ENCODE measurements at regions of chr11 and their contacts with region 1.

Region 1: DNA sequence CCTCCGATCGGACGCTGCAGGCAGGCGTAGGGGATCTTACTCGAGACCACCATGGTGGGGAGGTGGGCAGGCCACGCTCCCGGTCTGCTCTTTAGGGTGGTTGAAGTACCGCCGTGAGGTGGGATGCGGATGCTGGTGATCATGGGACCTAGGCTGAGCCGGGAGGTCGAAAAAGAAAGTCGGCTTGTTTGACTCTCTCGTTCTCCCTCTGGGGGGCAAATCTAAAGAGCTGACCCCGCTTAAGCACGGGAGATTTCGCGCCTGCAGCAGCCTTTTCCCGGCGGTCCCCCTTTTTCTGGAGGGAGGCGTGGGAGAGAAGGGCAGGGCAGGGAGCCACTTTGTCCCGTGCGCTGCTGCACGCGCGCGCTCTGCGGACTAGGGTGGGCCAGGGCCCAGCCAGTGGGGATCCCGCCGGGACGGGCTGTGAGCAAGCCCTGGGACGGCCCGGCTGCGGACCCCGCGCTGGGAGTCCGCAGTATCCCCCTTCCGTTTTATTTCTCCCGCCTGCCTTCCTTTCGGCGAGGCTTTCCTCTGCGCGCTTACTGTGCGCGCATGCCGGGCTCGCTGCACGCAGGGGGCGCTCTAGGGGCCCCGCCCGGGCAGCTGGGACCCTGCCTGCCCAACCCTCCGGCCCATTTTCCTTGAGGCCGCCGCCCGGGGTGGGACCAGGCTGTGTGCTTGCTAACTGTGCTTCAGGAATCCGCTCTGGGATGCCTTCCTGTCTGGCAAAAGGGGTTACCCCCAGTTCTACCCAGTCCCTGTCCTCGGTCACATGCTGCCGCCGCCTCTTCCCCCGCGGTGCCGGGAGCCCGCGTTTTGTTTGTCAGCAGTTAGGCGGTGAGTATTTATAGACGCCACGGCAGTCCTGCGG is 81.0 kb downstream of the PRR5L start:
- DNase-seq: peak; percentile 49
- H3K4me3 Mint-ChIP-seq: peak overlapping the region; percentile 89
- H3K27ac Mint-ChIP-seq: peak overlapping the region; percentile 81
- H3K4me1 Mint-ChIP-seq: peaks cover 28% of the 10 kb centered on the region
- H3K27me3 Mint-ChIP-seq: peaks cover 65% of the 10 kb centered on the region

Region 2: DNA sequence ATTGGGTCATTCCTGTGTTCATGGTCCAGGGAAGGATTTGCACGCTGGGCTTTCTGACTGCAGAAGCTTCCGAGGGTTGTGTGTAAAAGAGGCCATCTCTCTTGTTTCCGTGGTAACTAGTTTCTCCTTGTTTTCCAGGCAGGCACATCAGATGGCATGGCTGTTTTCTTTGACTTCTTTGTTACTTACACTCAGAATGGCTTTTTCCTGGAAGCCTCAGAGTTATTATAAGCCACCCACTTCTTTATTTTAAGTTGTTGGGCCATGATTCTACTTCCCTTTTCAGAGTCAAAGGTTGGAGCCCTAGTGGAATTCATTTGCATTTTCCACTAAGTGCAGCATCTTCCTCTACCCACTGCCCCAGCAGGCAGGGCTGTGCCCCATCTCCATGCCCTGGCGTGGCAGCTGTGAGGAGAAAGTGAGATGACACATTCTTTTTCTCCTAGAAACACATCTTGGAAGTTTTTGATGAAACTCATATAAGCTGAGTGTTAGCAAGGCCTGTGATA is 13.9 kb after region 1 on chr11:
- intact Hi-C with region 1: loop called (anchors 2 kb)
- DNase-seq: no peak
- H3K4me3 Mint-ChIP-seq: no peak overlapping the region
- H3K27ac Mint-ChIP-seq: peak overlapping the region; percentile 62
- H3K4me1 Mint-ChIP-seq: peaks cover 51% of the 10 kb centered on the region
- H3K27me3 Mint-ChIP-seq: peaks cover 1% of the 10 kb centered on the region

Region 3: GRCh38 chr11:36421546-36422155 is 44.5 kb after region 1 on chr11:
- intact Hi-C with region 1: loop called (anchors 1 kb)
- DNase-seq: no peak
- H3K4me3 Mint-ChIP-seq: peak overlapping the region; percentile 10
- H3K27ac Mint-ChIP-seq: peak overlapping the region; percentile 70
- H3K4me1 Mint-ChIP-seq: peaks cover 56% of the 10 kb centered on the region
- H3K27me3 Mint-ChIP-seq: peaks cover 8% of the 10 kb centered on the region